ENCODE measurements at regions of chr2 and their contacts with region 1.

Region 1: GRCh38 chr2:85595301-85596025 is at the start of gene RNF181:
- DNase-seq: peak; percentile 91
- H3K4me3 Mint-ChIP-seq: peak within 1 kb of the TSS; percentile 99
- H3K27ac Mint-ChIP-seq: peak within 1 kb of the TSS; percentile 92
- H3K4me1 Mint-ChIP-seq: peaks cover 22% of the 10 kb centered on the region
- H3K27me3 Mint-ChIP-seq: no peaks in the 10 kb centered on the region
- total RNA-seq, gene RNF181: 111 and 116 TPM in 2 replicates

Region 2: DNA sequence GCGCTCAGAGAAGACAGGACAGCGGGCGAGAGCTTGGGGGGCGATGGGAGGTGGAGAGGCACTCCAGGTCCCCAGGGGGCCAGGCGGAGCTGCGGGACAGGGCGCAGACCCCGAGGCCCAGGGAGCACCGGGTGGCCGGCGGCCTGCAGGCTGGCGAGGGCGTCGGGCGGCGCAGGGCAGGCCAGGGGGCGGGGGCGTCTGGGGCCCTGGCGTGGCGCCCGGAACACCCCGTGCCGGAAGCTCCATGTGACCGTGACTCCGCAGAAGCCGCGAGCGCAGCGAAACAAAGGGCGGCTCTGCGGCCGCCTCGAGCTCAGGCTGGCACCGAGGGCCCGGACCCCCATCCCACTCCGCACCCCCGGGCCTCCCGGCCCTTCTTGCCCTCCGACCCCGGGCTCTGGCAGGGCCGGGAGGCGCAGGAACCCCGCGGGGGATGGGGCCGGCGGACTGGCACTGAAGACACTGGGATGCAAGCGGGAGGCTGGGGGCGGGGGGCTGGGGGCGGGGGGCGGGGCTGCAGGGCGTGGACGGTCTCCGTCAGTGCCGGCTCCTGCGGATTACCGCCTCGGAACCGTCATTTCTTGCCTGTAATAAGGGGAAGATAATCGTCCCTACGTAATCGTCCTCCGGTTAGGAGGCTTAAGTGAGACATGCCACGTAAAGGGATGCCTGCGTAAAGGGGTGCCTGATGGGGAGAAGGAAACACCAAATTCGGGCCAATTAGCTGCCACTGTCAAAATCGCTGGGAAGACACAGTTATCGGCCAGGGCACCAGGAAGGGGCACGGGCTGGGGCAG is 157.8 kb before region 1 on chr2:
- intact Hi-C with region 1: loop called (anchors 1 kb)
- DNase-seq: peak; percentile 66
- H3K4me3 Mint-ChIP-seq: peak overlapping the region; percentile 88
- H3K27ac Mint-ChIP-seq: peak overlapping the region; percentile 97
- H3K4me1 Mint-ChIP-seq: peaks cover 26% of the 10 kb centered on the region
- H3K27me3 Mint-ChIP-seq: peaks cover 1% of the 10 kb centered on the region

Region 3: GRCh38 chr2:85561317-85561979 is 34.0 kb before region 1 on chr2 and contains the start of gene GGCX:
- intact Hi-C with region 1: loop called (anchors 1 kb)
- DNase-seq: peak; percentile 88
- H3K4me3 Mint-ChIP-seq: peak within 1 kb of the TSS; percentile 94
- H3K27ac Mint-ChIP-seq: peak within 1 kb of the TSS; percentile 81
- H3K4me1 Mint-ChIP-seq: peaks cover 36% of the 10 kb centered on the region
- H3K27me3 Mint-ChIP-seq: no peaks in the 10 kb centered on the region
- total RNA-seq, gene GGCX: 26.2 and 28.3 TPM in 2 replicates

Region 4: GRCh38 chr2:85577386-85578242 is 17.8 kb before region 1 on chr2 and contains the start of gene VAMP8:
- intact Hi-C with region 1: loop called (anchors 2 kb)
- DNase-seq: peak; percentile 52
- H3K4me3 Mint-ChIP-seq: peak within 1 kb of the TSS; percentile 91
- H3K27ac Mint-ChIP-seq: peak within 1 kb of the TSS; percentile 86
- H3K4me1 Mint-ChIP-seq: peaks cover 35% of the 10 kb centered on the region
- H3K27me3 Mint-ChIP-seq: peaks cover 3% of the 10 kb centered on the region
- total RNA-seq, gene VAMP8: 86.1 and 89.6 TPM in 2 replicates

Region 5: DNA sequence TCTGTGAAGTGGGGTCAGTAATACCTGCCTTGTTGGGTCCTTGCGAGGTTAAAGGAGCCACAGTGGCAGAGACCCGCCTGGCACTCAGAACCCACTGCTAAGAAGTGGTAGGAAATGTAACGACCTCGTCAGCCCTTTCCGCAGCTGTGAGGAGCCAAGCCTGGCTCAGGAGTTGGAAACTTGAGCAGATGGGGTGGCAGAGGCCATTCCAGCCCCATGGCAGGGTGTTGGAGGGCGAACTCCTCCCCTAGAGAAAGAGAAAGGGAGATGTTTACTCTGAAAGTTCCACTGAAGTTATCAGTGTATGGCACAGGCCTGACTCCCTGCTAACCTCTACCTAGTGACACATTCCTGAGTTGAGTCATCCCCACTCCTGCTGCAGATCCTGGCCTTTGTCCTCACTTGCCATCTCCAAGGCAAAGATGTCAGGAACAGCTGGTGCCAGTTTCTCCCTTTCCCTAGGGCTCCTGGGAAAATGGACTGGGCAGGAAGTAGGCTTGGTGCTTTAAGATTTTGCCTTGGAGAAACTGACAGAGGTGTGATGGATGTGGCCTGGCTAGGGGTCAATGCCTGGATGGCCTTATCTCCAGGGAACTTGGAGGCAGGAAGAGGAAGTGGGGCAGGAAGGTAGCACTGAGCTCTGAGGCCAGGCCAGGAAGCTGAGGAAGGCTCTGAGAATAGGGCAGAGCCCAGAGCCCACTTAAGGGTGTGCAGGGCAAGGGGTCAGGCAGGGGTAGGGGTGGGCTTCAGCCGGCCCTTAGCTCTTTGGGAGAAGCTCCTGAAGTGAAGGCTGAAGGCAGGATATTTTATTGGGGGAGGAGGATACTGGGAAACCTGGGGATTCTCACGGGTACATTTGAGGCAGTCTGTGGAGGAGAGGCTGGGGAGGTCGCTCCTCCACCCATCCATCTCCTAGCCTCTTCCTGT is 10.3 kb before region 1 on chr2:
- intact Hi-C with region 1: loop called (anchors 1 kb)
- DNase-seq: no peak
- H3K4me3 Mint-ChIP-seq: peak overlapping the region; percentile 88
- H3K27ac Mint-ChIP-seq: peak overlapping the region; percentile 94
- H3K4me1 Mint-ChIP-seq: peaks cover 43% of the 10 kb centered on the region
- H3K27me3 Mint-ChIP-seq: no peaks in the 10 kb centered on the region

Region 6: GRCh38 chr2:85611705-85612587 is 16.5 kb after region 1 on chr2 and contains the start of gene C2orf68:
- intact Hi-C with region 1: loop called (anchors 1 kb)
- DNase-seq: peak; percentile 86
- H3K4me3 Mint-ChIP-seq: peak within 1 kb of the TSS; percentile 98
- H3K27ac Mint-ChIP-seq: peak within 1 kb of the TSS; percentile 89
- H3K4me1 Mint-ChIP-seq: peaks cover 12% of the 10 kb centered on the region
- H3K27me3 Mint-ChIP-seq: no peaks in the 10 kb centered on the region
- total RNA-seq, gene C2orf68: 36.3 and 36.7 TPM in 2 replicates

Region 7: DNA sequence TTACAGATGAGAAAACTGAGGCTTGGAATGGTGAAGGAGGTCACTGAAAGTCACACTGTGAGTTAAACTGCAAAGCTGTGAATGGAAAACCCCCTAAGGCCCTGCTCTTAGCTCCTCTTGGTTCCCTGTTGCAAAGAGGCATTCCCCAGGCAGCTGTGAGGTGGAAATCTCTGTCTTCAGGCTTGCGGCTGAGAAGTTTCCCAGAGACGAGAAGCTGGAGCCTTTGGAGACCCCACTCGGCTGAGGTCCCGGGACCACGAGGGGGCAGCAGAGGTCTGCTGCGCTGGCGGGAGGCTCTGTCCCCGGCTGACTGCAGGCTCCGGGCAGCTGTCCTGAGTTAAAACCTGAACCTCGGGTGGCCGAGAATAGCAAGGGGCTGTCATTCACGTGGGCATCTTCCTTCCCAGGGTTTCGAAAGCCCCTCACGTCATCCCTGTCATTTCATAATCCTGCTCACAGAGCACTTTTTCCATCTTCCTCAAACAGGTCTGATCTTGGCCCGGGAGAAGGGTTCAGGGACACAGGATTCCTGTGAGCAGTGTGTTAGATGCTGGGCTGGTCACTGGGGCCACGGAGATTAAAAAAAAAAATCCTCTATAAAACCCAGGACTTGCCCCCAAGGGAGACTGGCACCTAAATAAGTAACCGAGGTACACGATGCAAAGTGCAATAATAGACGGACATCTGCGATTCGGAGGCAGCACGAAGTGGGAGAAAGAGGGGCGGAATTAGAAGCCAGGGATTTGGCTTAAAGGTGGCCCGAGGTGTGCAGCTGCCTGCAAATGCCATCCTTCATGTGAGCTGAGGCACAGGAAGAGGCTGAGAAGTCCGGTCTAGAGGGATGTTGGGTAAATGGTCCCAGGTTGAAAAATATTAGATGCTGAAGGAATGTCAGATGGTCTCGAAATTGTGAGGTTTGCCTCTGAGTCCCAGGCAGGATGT is 133.7 kb after region 1 on chr2:
- intact Hi-C with region 1: no loop called
- DNase-seq: peak; percentile 65
- H3K4me3 Mint-ChIP-seq: no peak overlapping the region
- H3K27ac Mint-ChIP-seq: no peak overlapping the region
- H3K4me1 Mint-ChIP-seq: peaks cover 13% of the 10 kb centered on the region
- H3K27me3 Mint-ChIP-seq: peaks cover 17% of the 10 kb centered on the region